Head of caudate nucleus (tissue), 42 donors: ENCODE measurements at regions of chr6 and their contacts with region 1.

Region 1: GRCh38 chr6:122187186-122187585 is 212.3 kb upstream of the HSF2 start:
- DNase-seq: no peak

Region 2: GRCh38 chr6:121430514-121431460 is 756.4 kb before region 1 on chr6:
- intact Hi-C with region 1: loop called (anchors 5 kb)
- DNase-seq: peak in 4 of 42 donors; percentile 8 to 42 (median 21)